ENCODE measurements at regions of chr12 and their contacts with region 1.

Region 1: GRCh38 chr12:4604684-4605193 is 42.7 kb downstream of the DYRK4 start:
- DNase-seq: peak; percentile 93
- H3K4me3 ChIP-seq: peak overlapping the region; percentile 60 to 88 (median 78)
- H3K27ac ChIP-seq: peak overlapping the region in 7 of 8 donors; percentile 67 to 84 (median 76)
- H3K4me1 ChIP-seq: peaks cover 10 to 30% (median 19%) of the 10 kb centered on the region in 6 donors
- H3K27me3 ChIP-seq: no peaks in the 10 kb centered on the region
- CTCF ChIP-seq: peak; percentile 90 to 98 (median 97)
- POLR2A ChIP-seq: no peak

Region 2: GRCh38 chr12:4540638-4541037 is 64.1 kb before region 1 on chr12:
- intact Hi-C with region 1: loop called (anchors 5 kb)
- DNase-seq: no peak
- H3K4me3 ChIP-seq: no peak overlapping the region
- H3K27ac ChIP-seq: no peak overlapping the region
- H3K4me1 ChIP-seq: peaks cover 13 to 47% (median 35%) of the 10 kb centered on the region in 6 donors
- H3K27me3 ChIP-seq: no peaks in the 10 kb centered on the region
- CTCF ChIP-seq: no peak
- POLR2A ChIP-seq: no peak

Region 3: GRCh38 chr12:4763549-4763948 is 158.8 kb after region 1 on chr12:
- intact Hi-C with region 1: loop called (anchors 10 kb)
- DNase-seq: no peak
- H3K4me3 ChIP-seq: no peak overlapping the region
- H3K27ac ChIP-seq: no peak overlapping the region
- H3K4me1 ChIP-seq: no peaks in the 10 kb centered on the region
- H3K27me3 ChIP-seq: no peaks in the 10 kb centered on the region
- CTCF ChIP-seq: no peak
- POLR2A ChIP-seq: no peak